ENCODE measurements at regions of chr5 and their contacts with region 1.

Region 1: DNA sequence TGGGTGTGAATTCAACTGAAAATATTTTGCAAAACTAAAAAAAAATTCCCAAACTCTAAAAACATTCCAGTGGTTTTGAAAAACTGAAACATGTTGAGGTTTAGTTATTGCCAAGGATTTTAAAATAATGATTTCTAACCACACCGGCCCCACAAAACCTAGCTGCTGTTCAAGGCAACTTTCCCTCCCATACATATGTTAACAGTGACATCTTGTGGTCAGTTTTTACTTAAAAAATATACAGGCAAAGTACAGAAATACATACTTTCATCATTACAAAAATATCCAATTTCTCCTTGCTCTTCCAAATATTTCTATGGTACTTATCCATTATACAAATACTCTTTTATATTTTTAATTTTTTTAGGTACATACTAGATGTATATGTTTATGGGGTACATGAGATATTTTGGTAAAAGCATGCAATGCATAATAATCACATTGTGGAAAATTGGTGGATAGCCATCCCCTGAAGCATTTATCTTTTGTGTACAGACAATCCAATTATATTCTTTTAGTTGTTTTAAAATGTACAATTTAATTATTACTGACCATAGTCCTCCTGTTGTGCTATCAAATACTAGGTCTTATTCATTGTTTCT is 34.4 kb upstream of the MRPS30 start:
- DNase-seq: no peak
- ATAC-seq: peak; percentile 74
- H3K4me3 ChIP-seq: no peak overlapping the region
- H3K27ac ChIP-seq: no peak overlapping the region
- H3K4me1 ChIP-seq: no peaks in the 10 kb centered on the region
- H3K27me3 ChIP-seq: no peaks in the 10 kb centered on the region
- CTCF ChIP-seq: peak; percentile 14 to 65 (median 18); a peak in 4 of 6 replicates
- EP300 ChIP-seq: no peak
- POLR2A ChIP-seq: no peak
- RAD21 ChIP-seq: peak; percentile 80

Region 2: GRCh38 chr5:43729846-43730478 is 1044.4 kb before region 1 on chr5:
- CTCF ChIA-PET with region 1: interaction called, 4 read pairs
- POLR2A ChIA-PET with region 1: no interaction called
- RAD21 ChIA-PET with region 1: no interaction called
- SMC1A ChIA-PET with region 1: interaction called, 6 read pairs
- in situ Hi-C with region 1: loop called (anchors 25 kb)
- intact Hi-C with region 1: loop called (anchors 5 kb)
- DNase-seq: no peak
- ATAC-seq: peak; percentile 40; the same call in 1 of the 3 replicates
- H3K4me3 ChIP-seq: no peak overlapping the region
- H3K27ac ChIP-seq: no peak overlapping the region
- H3K4me1 ChIP-seq: no peaks in the 10 kb centered on the region
- H3K27me3 ChIP-seq: no peaks in the 10 kb centered on the region; a peak in 1 of 4 replicates
- CTCF ChIP-seq: peak in 2 of 3 experiments; percentile 35 to 38; a peak in 4 of 6 replicates
- EP300 ChIP-seq: no peak
- POLR2A ChIP-seq: no peak
- RAD21 ChIP-seq: peak; percentile 54

Region 3: GRCh38 chr5:44536650-44537260 is 237.6 kb before region 1 on chr5:
- CTCF ChIA-PET with region 1: interaction called, 20 read pairs
- POLR2A ChIA-PET with region 1: no interaction called
- RAD21 ChIA-PET with region 1: interaction called, 4 read pairs
- SMC1A ChIA-PET with region 1: interaction called, 6 read pairs
- in situ Hi-C with region 1: loop called (anchors 5 kb)
- intact Hi-C with region 1: loop called (anchors 1 kb)
- DNase-seq: no peak
- ATAC-seq: peak; percentile 64
- H3K4me3 ChIP-seq: no peak overlapping the region
- H3K27ac ChIP-seq: no peak overlapping the region
- H3K4me1 ChIP-seq: no peaks in the 10 kb centered on the region
- H3K27me3 ChIP-seq: no peaks in the 10 kb centered on the region
- CTCF ChIP-seq: peak; percentile 58 to 63 (median 62)
- EP300 ChIP-seq: no peak
- POLR2A ChIP-seq: no peak
- RAD21 ChIP-seq: peak; percentile 66

Region 4: GRCh38 chr5:45162974-45163373 is 388.6 kb after region 1 on chr5:
- CTCF ChIA-PET with region 1: no interaction called
- POLR2A ChIA-PET with region 1: no interaction called
- RAD21 ChIA-PET with region 1: no interaction called
- SMC1A ChIA-PET with region 1: no interaction called
- in situ Hi-C with region 1: no loop called
- intact Hi-C with region 1: no loop called
- DNase-seq: no peak
- ATAC-seq: no peak
- H3K4me3 ChIP-seq: no peak overlapping the region
- H3K27ac ChIP-seq: no peak overlapping the region
- H3K4me1 ChIP-seq: no peaks in the 10 kb centered on the region
- H3K27me3 ChIP-seq: no peaks in the 10 kb centered on the region
- CTCF ChIP-seq: no peak
- EP300 ChIP-seq: no peak
- POLR2A ChIP-seq: no peak
- RAD21 ChIP-seq: no peak

Measured in GM12878 (cell line).